IMR-90 (cell line): ENCODE measurements at regions of chr14 and their contacts with region 1.

Region 1: DNA sequence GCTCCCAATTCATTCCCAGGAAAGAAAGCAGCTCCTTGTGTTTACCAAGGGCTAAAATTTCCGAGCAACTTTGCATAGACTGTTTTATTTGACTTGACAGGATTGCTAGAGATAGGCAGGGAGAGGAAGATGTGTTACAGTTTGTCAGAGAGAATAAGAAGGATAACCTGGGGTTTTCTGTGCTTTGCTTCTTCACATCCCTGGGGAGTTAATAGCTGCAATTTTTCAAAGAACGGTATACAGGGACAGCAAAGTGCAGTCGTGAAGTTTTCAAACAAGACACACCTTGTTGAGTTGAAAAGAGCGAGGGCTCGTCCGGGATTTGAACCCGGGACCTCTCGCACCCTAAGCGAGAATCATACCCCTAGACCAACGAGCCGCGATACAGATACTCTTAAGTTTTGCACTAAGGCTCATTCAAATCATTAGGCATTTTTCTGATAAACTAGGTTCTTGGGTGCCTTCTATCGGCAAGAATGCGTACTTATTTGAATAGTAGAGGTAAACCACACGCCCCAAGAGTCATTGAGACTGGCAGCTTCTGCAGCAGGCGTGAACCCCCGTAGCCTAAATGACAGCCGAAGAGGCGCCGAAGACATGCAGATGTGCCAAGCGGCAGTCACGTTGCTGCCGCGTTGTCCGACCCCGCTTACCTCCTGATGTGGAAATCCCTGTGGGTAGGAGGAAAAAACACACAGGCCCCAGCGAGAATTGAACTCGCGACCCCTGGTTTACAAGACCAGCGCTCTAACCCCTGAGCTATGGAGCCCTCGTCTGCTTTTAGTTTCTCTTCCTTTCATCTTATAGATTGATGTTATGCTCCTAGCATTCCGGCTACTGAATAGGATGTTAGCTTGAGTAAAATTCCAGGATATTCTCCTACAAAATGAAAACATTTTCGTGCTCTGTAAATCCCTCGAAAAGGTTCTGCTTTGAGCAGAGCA is 22.2 kb upstream of the RNASE12 start:
- DNase-seq: peak; percentile 99
- ATAC-seq: peak; percentile 84
- H3K4me3 ChIP-seq: peak overlapping the region; percentile 80
- H3K27ac ChIP-seq: no peak overlapping the region
- H3K4me1 ChIP-seq: no peaks in the 10 kb centered on the region
- H3K27me3 ChIP-seq: no peaks in the 10 kb centered on the region
- CTCF ChIP-seq: peak; percentile 84
- POLR2A ChIP-seq: no peak
- RAD21 ChIP-seq: 0 out of 2 replicates have a peak, but pooled peaks have one; percentile 15

Region 2: DNA sequence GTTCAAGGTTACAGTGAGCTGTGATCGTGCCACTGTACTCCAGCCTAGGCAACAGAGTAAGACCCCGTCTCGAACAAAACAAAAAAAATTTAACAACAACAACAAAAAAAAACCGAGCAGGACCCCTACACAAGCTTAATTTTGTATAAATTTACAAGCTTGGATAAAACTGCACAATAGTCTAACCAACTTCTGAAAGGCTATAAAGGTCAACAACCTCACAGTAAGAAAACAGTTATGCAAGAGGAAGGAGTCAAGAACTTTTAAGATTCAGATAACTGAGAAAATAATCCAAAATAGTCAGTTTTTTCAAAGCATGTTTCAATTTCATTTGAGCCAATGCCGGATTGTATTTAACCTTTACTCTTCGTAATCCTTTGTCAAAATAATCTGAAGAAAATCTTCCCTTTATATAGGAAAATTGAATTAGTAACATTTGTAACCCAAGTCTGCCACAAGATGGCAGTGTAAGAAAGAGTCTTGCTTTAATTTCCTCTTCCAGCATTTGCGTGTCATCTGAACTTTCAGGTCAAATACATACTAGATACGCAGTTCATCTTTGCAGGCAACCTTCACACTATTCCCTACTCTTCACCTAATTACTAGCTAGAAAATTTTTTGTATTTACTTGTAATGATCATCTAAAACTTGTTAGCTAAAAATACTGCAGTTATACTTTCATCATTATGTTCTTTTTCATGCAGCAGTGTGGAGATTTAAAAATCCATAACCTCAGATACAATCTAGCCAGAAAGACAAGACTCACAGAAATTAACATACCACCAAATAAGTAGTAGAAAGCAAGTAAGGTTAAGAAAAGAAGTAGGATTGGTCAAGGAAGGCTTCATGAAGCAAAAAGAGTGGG is 286.1 kb before region 1 on chr14:
- CTCF ChIA-PET with region 1: no interaction called
- POLR2A ChIA-PET with region 1: no interaction called
- dilution Hi-C with region 1: no loop called
- in situ Hi-C with region 1: no loop called
- intact Hi-C with region 1: loop called (anchors 1 kb)
- DNase-seq: peak; percentile 72
- ATAC-seq: peak; percentile 91
- H3K4me3 ChIP-seq: no peak overlapping the region
- H3K27ac ChIP-seq: no peak overlapping the region
- H3K4me1 ChIP-seq: no peaks in the 10 kb centered on the region
- H3K27me3 ChIP-seq: no peaks in the 10 kb centered on the region
- CTCF ChIP-seq: peak; percentile 76
- POLR2A ChIP-seq: no peak
- RAD21 ChIP-seq: peak; percentile 76

Region 3: DNA sequence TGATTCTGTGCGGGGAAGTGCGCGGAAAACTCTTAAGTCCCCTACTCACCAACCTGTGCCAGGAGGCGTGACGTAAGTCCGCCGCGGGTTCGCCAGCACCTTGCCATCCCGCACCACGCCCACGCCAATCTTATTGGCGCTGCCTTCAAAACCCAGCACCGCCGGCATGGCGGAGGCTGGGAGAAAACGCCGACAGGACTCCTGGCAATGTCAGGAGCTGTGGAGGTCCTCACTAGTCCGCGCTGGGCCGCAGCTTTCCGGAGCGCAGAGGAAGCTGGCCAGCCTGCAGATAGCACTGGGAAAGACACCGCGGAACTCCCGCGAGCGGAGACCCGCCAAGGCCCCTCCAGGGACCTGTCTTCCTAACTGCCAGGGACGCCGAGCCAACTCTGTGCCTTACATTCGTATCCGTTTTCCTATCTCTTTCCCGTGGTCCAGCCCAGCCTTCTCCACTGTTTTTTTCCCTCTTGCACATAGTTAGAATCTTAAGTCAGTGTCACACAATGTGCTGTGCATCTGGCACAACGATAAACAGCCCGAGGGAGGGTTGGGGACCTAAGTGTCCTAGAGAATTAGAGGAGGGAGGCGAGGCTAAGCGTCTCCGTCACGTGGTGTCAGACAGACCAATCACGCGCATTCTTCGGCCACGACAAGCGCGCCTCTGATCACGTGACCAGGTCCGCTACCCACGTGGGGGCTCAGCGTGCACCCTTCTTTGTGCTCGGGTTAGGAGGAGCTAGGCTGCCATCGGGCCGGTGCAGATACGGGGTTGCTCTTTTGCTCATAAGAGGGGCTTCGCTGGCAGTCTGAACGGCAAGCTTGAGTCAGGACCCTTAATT is 158.6 kb before region 1 on chr14 and contains the starts of genes APEX1 and OSGEP:
- CTCF ChIA-PET with region 1: no interaction called
- POLR2A ChIA-PET with region 1: no interaction called
- dilution Hi-C with region 1: no loop called
- in situ Hi-C with region 1: no loop called
- intact Hi-C with region 1: loop called (anchors 1 kb)
- DNase-seq: peak; percentile 99
- ATAC-seq: peak; percentile 90
- H3K4me3 ChIP-seq: peak within 1 kb of the TSS; percentile 62
- H3K27ac ChIP-seq: peak within 1 kb of the TSS; percentile 80
- H3K4me1 ChIP-seq: no peaks in the 10 kb centered on the region
- H3K27me3 ChIP-seq: no peaks in the 10 kb centered on the region
- CTCF ChIP-seq: no peak
- POLR2A ChIP-seq: peak; percentile 87
- RAD21 ChIP-seq: no peak
- total RNA-seq, gene APEX1: 125 and 141 TPM in 2 replicates
- total RNA-seq, gene OSGEP: 32.4 and 38.0 TPM in 2 replicates

Region 4: DNA sequence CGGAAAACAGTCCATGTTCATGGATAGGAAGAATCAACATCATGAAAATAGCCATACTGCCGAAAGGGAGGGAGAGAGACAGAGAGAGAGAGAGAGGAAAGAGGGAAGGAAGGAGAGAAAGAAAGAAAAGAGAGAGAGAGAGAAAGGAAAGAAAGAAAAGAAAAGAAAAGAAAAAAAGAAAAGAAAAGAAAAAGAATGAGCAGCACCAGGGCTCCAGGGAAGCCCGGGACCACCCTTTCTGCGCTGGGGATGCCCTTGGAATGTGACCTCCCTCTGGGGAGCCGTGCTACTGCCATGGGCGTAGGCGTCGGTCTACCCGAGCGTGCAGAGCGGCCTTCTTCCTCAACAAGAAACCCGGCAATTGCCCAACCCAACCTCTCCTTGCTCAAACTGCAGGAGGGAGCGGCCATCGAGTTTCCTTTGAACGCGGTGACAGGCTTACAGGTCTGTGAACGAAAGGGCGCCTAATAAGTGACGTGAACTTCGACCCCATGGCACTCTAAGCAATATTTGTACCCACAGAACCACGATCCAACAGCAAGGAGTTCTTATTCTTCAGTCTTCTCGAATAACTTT is 11.2 kb after region 1 on chr14:
- CTCF ChIA-PET with region 1: interaction called, 6 read pairs
- POLR2A ChIA-PET with region 1: no interaction called
- dilution Hi-C with region 1: no loop called
- in situ Hi-C with region 1: no loop called
- intact Hi-C with region 1: loop called (anchors 1 kb)
- DNase-seq: peak; percentile 60
- ATAC-seq: peak; percentile 50
- H3K4me3 ChIP-seq: peak overlapping the region; percentile 81
- H3K27ac ChIP-seq: no peak overlapping the region
- H3K4me1 ChIP-seq: peaks cover 4% of the 10 kb centered on the region; the same call in 1 of the 2 replicates
- H3K27me3 ChIP-seq: peaks cover 12% of the 10 kb centered on the region
- CTCF ChIP-seq: no peak
- POLR2A ChIP-seq: no peak
- RAD21 ChIP-seq: no peak

Region 5: GRCh38 chr14:20682435-20683124 is 69.2 kb after region 1 on chr14:
- CTCF ChIA-PET with region 1: interaction called, 6 read pairs
- POLR2A ChIA-PET with region 1: no interaction called
- dilution Hi-C with region 1: no loop called
- in situ Hi-C with region 1: no loop called
- intact Hi-C with region 1: loop called (anchors 1 kb)
- DNase-seq: peak; percentile 92
- ATAC-seq: peak; percentile 67
- H3K4me3 ChIP-seq: peak overlapping the region; percentile 65
- H3K27ac ChIP-seq: peak overlapping the region; percentile 90
- H3K4me1 ChIP-seq: no peaks in the 10 kb centered on the region
- H3K27me3 ChIP-seq: no peaks in the 10 kb centered on the region
- CTCF ChIP-seq: no peak
- POLR2A ChIP-seq: peak; percentile 92
- RAD21 ChIP-seq: no peak

Region 6: GRCh38 chr14:20970983-20971704 is 357.8 kb after region 1 on chr14:
- CTCF ChIA-PET with region 1: interaction called, 7 read pairs
- POLR2A ChIA-PET with region 1: no interaction called
- dilution Hi-C with region 1: no loop called
- in situ Hi-C with region 1: no loop called
- intact Hi-C with region 1: loop called (anchors 1 kb)
- DNase-seq: peak; percentile 78
- ATAC-seq: peak; percentile 97
- H3K4me3 ChIP-seq: peak overlapping the region; percentile 57
- H3K27ac ChIP-seq: peak overlapping the region; percentile 33
- H3K4me1 ChIP-seq: peaks cover 5% of the 10 kb centered on the region; the same call in 1 of the 2 replicates
- H3K27me3 ChIP-seq: peaks cover 11% of the 10 kb centered on the region
- CTCF ChIP-seq: peak; percentile 97
- POLR2A ChIP-seq: no peak
- RAD21 ChIP-seq: peak; percentile 61